ENCODE measurements at regions of chr14 and their contacts with region 1.

Region 1: DNA sequence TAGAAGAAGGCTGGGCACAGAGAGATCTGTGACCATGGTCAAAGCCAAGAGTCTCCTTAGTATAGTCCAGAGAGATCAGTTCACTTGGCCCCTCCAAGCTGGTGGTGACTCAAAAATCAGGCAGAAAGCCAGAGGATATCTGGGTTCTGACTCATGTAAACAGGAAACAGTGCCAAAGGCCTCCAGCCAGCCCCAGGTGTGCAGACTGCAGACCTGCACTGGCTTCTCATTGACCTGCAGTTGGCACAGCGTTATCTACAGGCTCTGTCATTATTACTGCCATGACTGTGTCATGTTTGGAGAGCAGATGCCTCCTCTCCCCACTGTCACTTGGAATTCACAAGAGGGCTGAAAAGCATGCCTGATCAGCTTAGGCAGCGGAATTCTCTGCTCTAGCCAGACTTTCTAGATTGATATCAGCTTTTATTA is 295.8 kb upstream of the PRKD1 start:
- DNase-seq: peak; percentile 82 to 93
- H3K4me3 ChIP-seq: no peak overlapping the region
- H3K27ac ChIP-seq: peak overlapping the region; percentile 76
- H3K4me1 ChIP-seq: peaks cover 50% of the 10 kb centered on the region
- H3K27me3 ChIP-seq: no peaks in the 10 kb centered on the region
- CTCF ChIP-seq: no peak

Region 2: DNA sequence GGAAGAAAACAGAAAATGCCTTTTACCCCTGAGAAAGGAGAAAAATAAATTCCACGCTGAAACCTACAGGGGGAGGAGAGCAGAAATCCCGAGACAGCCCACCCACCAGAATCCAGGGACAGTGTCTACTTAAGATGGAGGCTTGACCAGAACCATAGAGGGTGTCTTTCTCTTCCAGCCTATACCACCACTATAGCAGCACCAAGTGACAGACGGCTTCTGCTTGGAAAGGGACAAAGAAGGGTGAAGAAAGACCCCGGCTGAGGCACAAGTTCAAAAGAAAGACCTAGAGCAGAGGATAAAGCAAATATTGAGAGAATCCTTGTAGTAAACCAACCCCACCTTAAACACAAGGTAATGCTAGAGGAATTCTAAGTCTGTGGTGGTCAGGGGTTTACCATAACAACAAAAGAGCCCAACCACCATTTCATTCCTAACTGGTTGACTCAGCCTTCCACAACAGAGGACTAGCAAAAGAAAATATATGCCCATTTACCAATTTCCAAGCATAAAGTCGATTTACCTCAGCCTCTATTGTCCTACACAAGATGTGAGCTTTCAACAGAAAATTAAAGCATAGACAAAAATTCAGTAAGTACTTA is 1562.1 kb before region 1 on chr14:
- CTCF ChIA-PET with region 1: no interaction called
- POLR2A ChIA-PET with region 1: no interaction called
- intact Hi-C with region 1: loop called (anchors 10 kb)
- DNase-seq: peak; percentile 25 to 38
- H3K4me3 ChIP-seq: no peak overlapping the region
- H3K27ac ChIP-seq: no peak overlapping the region
- H3K4me1 ChIP-seq: peaks cover 13% of the 10 kb centered on the region
- H3K27me3 ChIP-seq: no peaks in the 10 kb centered on the region
- CTCF ChIP-seq: no peak

Region 3: GRCh38 chr14:29846339-29847055 is 376.9 kb before region 1 on chr14:
- CTCF ChIA-PET with region 1: no interaction called
- POLR2A ChIA-PET with region 1: no interaction called
- intact Hi-C with region 1: no loop called
- DNase-seq: no peak
- H3K4me3 ChIP-seq: no peak overlapping the region
- H3K27ac ChIP-seq: no peak overlapping the region
- H3K4me1 ChIP-seq: no peaks in the 10 kb centered on the region
- H3K27me3 ChIP-seq: no peaks in the 10 kb centered on the region
- CTCF ChIP-seq: no peak